OCI-LY7 (cell line): ENCODE measurements at regions of chr7 and their contacts with region 1.

Region 1: GRCh38 chr7:131107337-131108211 is 220.1 kb upstream of the MKLN1 start:
- DNase-seq: peak; percentile 79
- H3K4me3 ChIP-seq: peak overlapping the region; percentile 85
- H3K27ac ChIP-seq: peak overlapping the region; percentile 85
- H3K4me1 ChIP-seq: peaks cover 37% of the 10 kb centered on the region
- CTCF ChIP-seq: no peak

Region 2: GRCh38 chr7:130961128-130961601 is 146.4 kb before region 1 on chr7:
- CTCF ChIA-PET with region 1: no interaction called
- POLR2A ChIA-PET with region 1: no interaction called
- intact Hi-C with region 1: loop called (anchors 5 kb)
- DNase-seq: peak; percentile 58
- H3K4me3 ChIP-seq: peak overlapping the region; percentile 63
- H3K27ac ChIP-seq: peak overlapping the region; percentile 79
- H3K4me1 ChIP-seq: peaks cover 61% of the 10 kb centered on the region
- CTCF ChIP-seq: no peak

Region 3: DNA sequence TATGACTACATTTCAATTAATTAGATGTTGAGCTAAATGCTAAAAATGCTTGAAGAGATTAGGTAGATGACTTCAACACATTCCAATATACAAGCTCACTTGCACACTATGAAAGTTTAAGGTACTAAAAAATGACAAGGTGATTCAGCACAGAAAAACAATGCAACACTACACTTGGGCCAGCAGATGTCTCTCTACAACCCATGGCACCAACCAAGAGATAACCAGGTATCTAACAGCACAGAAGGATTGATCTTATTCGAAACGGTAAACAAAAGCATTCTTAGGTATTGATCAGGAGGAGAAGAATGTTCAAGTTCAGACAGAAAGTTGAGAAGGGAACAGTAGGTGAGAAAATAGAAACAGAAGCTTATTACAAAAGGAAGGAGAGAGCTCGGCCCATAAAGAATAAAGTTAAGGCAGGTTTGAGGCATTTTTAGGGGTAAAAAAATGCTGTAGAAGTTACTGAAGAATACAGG is 125.4 kb before region 1 on chr7:
- CTCF ChIA-PET with region 1: no interaction called
- POLR2A ChIA-PET with region 1: no interaction called
- intact Hi-C with region 1: no loop called
- DNase-seq: peak; percentile 40
- H3K4me3 ChIP-seq: no peak overlapping the region
- H3K27ac ChIP-seq: peak overlapping the region; percentile 16
- H3K4me1 ChIP-seq: peaks cover 3% of the 10 kb centered on the region
- CTCF ChIP-seq: peak; percentile 83

Region 4: GRCh38 chr7:131068604-131069021 is 39.0 kb before region 1 on chr7:
- CTCF ChIA-PET with region 1: no interaction called
- POLR2A ChIA-PET with region 1: interaction called, 3 read pairs
- intact Hi-C with region 1: loop called (anchors 2 kb)
- DNase-seq: no peak
- H3K4me3 ChIP-seq: no peak overlapping the region
- H3K27ac ChIP-seq: no peak overlapping the region
- H3K4me1 ChIP-seq: peaks cover 40% of the 10 kb centered on the region
- CTCF ChIP-seq: peak; percentile 45; the same call in 1 of the 2 replicates

Region 5: GRCh38 chr7:131231381-131232220 is 124.0 kb after region 1 on chr7:
- CTCF ChIA-PET with region 1: no interaction called
- POLR2A ChIA-PET with region 1: interaction called, 7 read pairs
- intact Hi-C with region 1: loop called (anchors 2 kb)
- DNase-seq: peak; percentile 72
- H3K4me3 ChIP-seq: peak overlapping the region; percentile 37
- H3K27ac ChIP-seq: peak overlapping the region; percentile 73
- H3K4me1 ChIP-seq: peaks cover 28% of the 10 kb centered on the region
- CTCF ChIP-seq: no peak

Region 6: DNA sequence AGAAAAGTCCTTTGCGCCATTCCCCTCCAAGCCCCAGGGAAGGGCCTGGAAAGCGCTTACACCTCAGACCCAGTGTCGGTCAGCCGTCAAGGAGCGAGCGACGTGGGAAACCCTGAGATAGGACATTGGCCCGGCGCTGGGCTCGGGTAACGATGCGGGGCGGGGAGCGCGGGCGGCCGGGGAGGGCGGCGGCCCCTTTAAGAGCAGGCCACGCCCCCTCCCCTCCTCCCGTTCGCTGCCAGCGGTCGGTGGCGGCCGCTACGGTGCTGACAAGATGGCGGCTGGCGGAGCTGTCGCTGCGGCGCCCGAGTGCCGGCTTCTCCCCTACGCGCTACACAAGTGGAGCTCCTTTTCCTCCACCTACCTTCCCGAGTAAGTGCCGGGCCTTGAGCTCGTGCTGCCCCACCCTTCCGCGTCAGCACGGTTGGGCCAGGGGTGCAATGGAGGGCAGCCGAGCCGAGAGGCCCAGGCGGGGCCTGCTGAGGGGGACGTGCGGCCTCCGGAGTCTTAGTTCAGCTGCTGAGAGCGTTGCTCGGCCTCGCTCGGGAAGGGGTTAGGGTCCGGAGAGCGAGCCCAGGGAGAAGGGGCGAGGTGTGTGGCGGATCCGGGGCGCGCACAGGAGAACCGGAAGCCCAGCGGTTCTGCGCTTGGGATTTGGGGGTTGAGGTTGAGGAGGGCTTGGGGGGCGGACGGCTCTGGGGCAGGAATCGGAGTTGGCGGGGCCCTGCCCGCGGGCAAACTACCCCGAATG is 220.2 kb after region 1 on chr7 and contains the start of gene MKLN1:
- CTCF ChIA-PET with region 1: no interaction called
- POLR2A ChIA-PET with region 1: interaction called, 3 read pairs
- intact Hi-C with region 1: loop called (anchors 2 kb)
- DNase-seq: peak; percentile 86
- H3K4me3 ChIP-seq: peak within 1 kb of the TSS; percentile 99
- H3K27ac ChIP-seq: peak within 1 kb of the TSS; percentile 72
- H3K4me1 ChIP-seq: peaks cover 30% of the 10 kb centered on the region
- CTCF ChIP-seq: no peak
- total RNA-seq, gene MKLN1: 10.8 and 12.1 TPM in 2 replicates